ENCODE measurements at regions of chr21 and their contacts with region 1.

Region 1: DNA sequence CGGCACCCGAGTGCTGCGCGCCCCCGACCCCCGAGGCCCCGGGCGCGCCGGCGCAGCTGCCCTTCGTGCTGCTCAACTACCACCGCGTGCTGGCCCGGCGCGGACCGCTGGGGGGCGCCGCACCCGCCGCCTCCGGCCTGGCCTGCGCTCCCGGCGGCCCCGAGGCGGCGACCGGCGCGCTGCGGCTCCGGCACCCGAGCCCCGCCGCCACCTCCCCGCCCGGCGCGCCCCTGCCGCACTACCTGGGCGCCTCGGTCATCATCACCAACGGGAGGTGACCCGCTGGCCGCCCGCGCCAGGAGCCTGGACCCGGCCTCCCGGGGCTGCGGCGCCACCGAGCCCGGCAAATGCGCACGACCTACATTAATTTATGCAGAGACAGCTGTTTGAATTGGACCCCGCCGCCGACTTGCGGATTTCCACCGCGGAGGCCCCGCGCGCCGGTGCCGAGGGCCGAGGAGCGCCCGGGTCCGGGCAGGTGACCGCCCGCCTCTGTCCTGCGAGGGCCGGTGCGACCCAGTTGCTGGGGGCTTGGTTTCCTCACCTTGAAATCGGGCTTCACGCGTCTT is 49.0 kb downstream of the SIM2 start:
- DNase-seq: peak; percentile 38 to 60
- ATAC-seq: peak; percentile 42 to 85 (median 66)
- H3K4me3 ChIP-seq: peak overlapping the region; percentile 34 to 60 (median 53)
- H3K27ac ChIP-seq: peak overlapping the region in 1 of 10 donors; percentile 39
- H3K4me1 ChIP-seq: peaks cover 0 to 28% (median 9%) of the 10 kb centered on the region in 9 donors
- H3K27me3 ChIP-seq: peaks cover 0 to 51% (median 13%) of the 10 kb centered on the region in 7 donors
- CTCF ChIP-seq: peak in 5 of 9 donors; percentile 6 to 38 (median 35)

Region 2: DNA sequence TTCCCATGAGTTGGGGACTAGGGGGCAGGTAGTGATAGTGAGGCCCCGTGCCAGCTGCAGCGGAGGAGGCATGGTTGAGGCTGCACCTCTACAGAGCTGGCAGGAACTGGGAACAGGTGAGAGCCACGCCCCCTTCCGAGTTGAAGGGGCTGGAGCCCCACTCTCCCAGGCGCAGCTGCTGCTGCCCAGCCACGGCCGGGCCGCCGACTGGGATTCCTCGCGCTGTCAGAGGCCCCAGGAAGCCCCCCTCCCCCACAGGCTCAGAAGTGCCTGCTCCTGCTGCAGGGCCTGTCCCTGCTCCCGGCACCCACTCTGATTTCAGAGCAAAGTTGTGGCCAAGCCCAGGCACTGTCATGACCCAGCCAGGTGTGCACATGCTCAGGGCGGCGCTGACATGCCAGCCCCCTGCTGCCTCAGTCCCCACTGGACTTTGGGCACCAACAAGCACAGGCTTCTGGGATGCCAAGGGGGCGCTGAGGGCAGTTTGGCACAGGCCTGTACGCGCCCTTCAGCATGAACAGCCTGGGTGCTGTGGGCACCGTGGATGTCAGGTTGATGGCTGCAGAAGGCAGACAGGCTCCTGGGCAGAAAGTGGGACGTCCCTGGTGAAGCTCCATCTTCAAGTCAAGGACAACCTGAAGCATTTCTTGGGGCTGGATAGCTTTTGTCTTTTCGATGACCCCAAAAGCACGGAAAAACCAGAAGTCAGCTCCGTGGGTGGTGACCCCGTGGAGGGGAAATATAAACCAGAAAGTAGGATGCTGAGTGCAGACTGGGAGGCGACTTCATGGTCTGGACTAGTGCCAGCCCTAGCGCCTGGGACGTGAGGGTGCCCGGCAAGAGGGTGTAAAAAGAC is 72.5 kb after region 1 on chr21:
- intact Hi-C with region 1: no loop called
- DNase-seq: no peak
- ATAC-seq: peak in 1 of 8 donors; percentile 38
- H3K4me3 ChIP-seq: no peak overlapping the region
- H3K27ac ChIP-seq: no peak overlapping the region
- H3K4me1 ChIP-seq: no peaks in the 10 kb centered on the region
- H3K27me3 ChIP-seq: no peaks in the 10 kb centered on the region
- CTCF ChIP-seq: no peak

Region 3: DNA sequence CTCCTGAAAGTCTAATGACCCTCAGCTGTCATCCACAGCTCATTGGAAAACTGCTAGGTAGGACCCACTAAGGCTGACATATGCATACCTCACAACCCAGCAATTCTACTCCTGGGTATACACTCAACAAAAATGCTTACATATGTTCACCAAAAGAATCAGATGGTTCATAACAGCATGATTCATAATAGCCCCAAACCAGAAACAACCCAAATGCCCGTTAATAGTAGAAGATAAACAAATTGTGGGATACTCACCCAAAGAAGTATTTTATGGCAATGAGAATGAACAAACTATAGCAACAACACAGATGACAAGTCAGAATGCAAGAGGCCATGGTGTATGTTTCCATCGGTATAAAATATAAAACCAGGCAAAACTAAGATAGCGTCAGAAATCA is 94.0 kb after region 1 on chr21:
- intact Hi-C with region 1: loop called in 2 of 10 experiments (anchors 5 to 10 kb)
- DNase-seq: no peak
- ATAC-seq: no peak
- H3K4me3 ChIP-seq: no peak overlapping the region
- H3K27ac ChIP-seq: no peak overlapping the region
- H3K4me1 ChIP-seq: peaks cover 0 to 4% (median 0%) of the 10 kb centered on the region in 9 donors
- H3K27me3 ChIP-seq: no peaks in the 10 kb centered on the region
- CTCF ChIP-seq: no peak

Region 4: GRCh38 chr21:36847171-36847570 is 99.3 kb after region 1 on chr21:
- intact Hi-C with region 1: loop called (anchors 2 to 10 kb)
- DNase-seq: no peak
- ATAC-seq: no peak
- H3K4me3 ChIP-seq: no peak overlapping the region
- H3K27ac ChIP-seq: no peak overlapping the region
- H3K4me1 ChIP-seq: peaks cover 0 to 17% (median 0%) of the 10 kb centered on the region in 9 donors
- H3K27me3 ChIP-seq: no peaks in the 10 kb centered on the region
- CTCF ChIP-seq: no peak

Region 5: GRCh38 chr21:36854391-36854790 is 106.5 kb after region 1 on chr21:
- intact Hi-C with region 1: loop called in 9 of 10 experiments (anchors 2 to 10 kb)
- DNase-seq: peak in 1 of 2 donors; percentile 41
- ATAC-seq: peak; percentile 38 to 86 (median 66)
- H3K4me3 ChIP-seq: no peak overlapping the region
- H3K27ac ChIP-seq: no peak overlapping the region
- H3K4me1 ChIP-seq: peaks cover 0 to 9% (median 0%) of the 10 kb centered on the region in 9 donors
- H3K27me3 ChIP-seq: no peaks in the 10 kb centered on the region
- CTCF ChIP-seq: peak; percentile 32 to 79 (median 66)